CD8-positive, alpha-beta T cell (primary cell): ENCODE measurements at regions of chr3 and their contacts with region 1.

Region 1: GRCh38 chr3:187164885-187165543 is 25.7 kb upstream of the RPL39L start:
- DNase-seq: peak in 6 of 9 experiments; percentile 8 to 83 (median 38)
- ATAC-seq: peak; percentile 77
- H3K4me3 ChIP-seq: no peak overlapping the region
- H3K4me3 Mint-ChIP-seq: no peak overlapping the region
- H3K27ac ChIP-seq: no peak overlapping the region
- H3K27ac Mint-ChIP-seq: no peak overlapping the region
- H3K4me1 ChIP-seq: no peaks in the 10 kb centered on the region
- H3K4me1 Mint-ChIP-seq: peaks cover 3% of the 10 kb centered on the region
- H3K27me3 ChIP-seq: peaks cover 0 to 3% of the 10 kb centered on the region in 2 experiments
- H3K27me3 Mint-ChIP-seq: no peaks in the 10 kb centered on the region
- CTCF ChIP-seq: peak; percentile 90

Region 2: DNA sequence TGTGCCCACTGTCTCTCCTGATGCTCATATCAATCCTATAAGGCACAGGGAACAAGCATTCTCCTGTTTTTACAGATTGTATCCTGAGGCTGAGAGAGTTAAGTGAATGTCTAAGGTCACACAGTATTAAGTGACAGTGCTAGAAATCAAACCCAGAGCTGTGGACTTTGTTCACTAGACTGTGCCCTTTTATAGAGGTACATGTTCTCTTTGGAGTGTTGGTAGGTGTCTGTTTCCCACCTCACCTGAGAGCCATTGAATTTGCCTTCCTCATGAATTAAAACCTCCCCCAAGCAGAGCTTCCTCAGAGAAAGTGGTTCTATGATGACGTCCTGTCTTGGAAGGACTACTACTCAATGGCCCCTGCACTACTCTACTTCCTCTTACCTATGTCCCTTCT is 310.1 kb before region 1 on chr3:
- CTCF ChIA-PET with region 1: interaction called, 45 read pairs
- POLR2A ChIA-PET with region 1: no interaction called
- intact Hi-C with region 1: no loop called
- DNase-seq: no peak
- ATAC-seq: no peak
- H3K4me3 ChIP-seq: no peak overlapping the region
- H3K4me3 Mint-ChIP-seq: no peak overlapping the region
- H3K27ac ChIP-seq: no peak overlapping the region
- H3K27ac Mint-ChIP-seq: no peak overlapping the region
- H3K4me1 ChIP-seq: no peaks in the 10 kb centered on the region
- H3K4me1 Mint-ChIP-seq: peaks cover 16% of the 10 kb centered on the region
- H3K27me3 ChIP-seq: no peaks in the 10 kb centered on the region
- H3K27me3 Mint-ChIP-seq: no peaks in the 10 kb centered on the region
- CTCF ChIP-seq: no peak

Region 3: GRCh38 chr3:187101184-187102072 is 63.6 kb before region 1 on chr3:
- CTCF ChIA-PET with region 1: interaction called, 44 read pairs
- POLR2A ChIA-PET with region 1: no interaction called
- intact Hi-C with region 1: no loop called
- DNase-seq: peak; percentile 25 to 74 (median 55)
- ATAC-seq: peak; percentile 71
- H3K4me3 ChIP-seq: peak overlapping the region in 1 of 2 experiments; percentile 27
- H3K4me3 Mint-ChIP-seq: peak overlapping the region; percentile 54
- H3K27ac ChIP-seq: peak overlapping the region in 1 of 2 experiments; percentile 44
- H3K27ac Mint-ChIP-seq: peak overlapping the region; percentile 63
- H3K4me1 ChIP-seq: peaks cover 16% of the 10 kb centered on the region
- H3K4me1 Mint-ChIP-seq: peaks cover 19% of the 10 kb centered on the region
- H3K27me3 ChIP-seq: no peaks in the 10 kb centered on the region
- H3K27me3 Mint-ChIP-seq: no peaks in the 10 kb centered on the region
- CTCF ChIP-seq: no peak

Region 4: DNA sequence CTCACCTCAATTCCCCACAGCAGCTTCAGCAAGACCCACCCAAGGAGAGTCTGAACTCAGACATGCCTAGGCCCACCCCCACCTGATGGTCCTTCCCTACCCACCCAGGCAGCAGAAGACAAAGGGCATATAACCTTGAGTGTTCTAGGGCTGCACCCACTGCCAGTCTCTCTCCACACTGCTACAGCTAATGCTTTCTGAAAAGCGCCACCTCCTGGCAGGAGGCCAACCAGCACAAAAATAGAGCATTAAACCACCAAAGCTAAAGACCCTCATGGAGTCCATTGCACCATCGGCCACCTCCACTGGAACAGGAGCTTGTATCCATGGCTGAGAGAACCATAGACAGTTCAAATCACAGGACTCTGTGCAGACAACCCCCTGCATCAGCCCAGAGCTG is 14.4 kb before region 1 on chr3:
- CTCF ChIA-PET with region 1: interaction called, 32 read pairs
- POLR2A ChIA-PET with region 1: no interaction called
- intact Hi-C with region 1: no loop called
- DNase-seq: peak; percentile 37 to 80 (median 65)
- ATAC-seq: peak; percentile 56
- H3K4me3 ChIP-seq: no peak overlapping the region
- H3K4me3 Mint-ChIP-seq: no peak overlapping the region
- H3K27ac ChIP-seq: no peak overlapping the region
- H3K27ac Mint-ChIP-seq: no peak overlapping the region
- H3K4me1 ChIP-seq: no peaks in the 10 kb centered on the region
- H3K4me1 Mint-ChIP-seq: peaks cover 9% of the 10 kb centered on the region
- H3K27me3 ChIP-seq: no peaks in the 10 kb centered on the region
- H3K27me3 Mint-ChIP-seq: no peaks in the 10 kb centered on the region
- CTCF ChIP-seq: peak; percentile 39

Region 5: DNA sequence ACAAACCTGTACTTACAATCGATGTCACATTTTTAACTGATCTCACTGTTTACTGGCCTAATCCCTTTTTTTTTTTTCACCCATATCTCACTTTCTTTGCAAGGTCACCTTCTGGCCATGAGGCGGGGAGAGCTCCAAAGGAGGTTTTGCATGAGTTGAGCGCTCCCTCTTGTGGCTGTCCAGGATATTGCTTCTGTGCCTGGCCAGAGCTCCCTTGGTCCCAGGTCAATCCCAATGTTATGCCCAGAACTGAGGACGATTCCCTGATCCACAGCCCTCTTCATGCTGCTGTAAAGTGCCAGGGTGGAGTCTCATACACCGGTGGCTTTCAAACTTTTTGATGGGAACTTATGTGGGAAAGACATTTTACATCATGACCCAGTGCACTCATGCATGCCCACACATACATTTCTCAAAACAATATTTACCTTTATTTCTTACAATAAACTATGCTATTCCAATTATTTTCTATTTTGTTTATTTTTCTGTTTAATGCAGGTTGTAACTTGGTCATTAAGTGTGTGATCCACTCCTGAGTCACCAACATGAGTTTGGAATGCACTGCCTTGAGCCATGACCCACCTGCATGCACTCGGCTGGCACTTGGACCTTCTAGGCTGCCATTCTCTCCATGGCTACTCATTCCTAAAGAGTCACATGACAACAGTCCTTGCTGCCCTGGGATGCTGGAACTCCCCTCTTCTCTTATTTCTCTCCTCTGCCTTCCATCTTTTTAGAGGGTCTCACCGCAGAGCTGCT is 514.8 kb after region 1 on chr3:
- CTCF ChIA-PET with region 1: no interaction called
- POLR2A ChIA-PET with region 1: no interaction called
- intact Hi-C with region 1: no loop called
- DNase-seq: peak; percentile 32 to 75 (median 63)
- ATAC-seq: peak; percentile 54
- H3K4me3 ChIP-seq: no peak overlapping the region
- H3K4me3 Mint-ChIP-seq: no peak overlapping the region
- H3K27ac ChIP-seq: no peak overlapping the region
- H3K27ac Mint-ChIP-seq: no peak overlapping the region
- H3K4me1 ChIP-seq: no peaks in the 10 kb centered on the region
- H3K4me1 Mint-ChIP-seq: no peaks in the 10 kb centered on the region
- H3K27me3 ChIP-seq: no peaks in the 10 kb centered on the region
- H3K27me3 Mint-ChIP-seq: peaks cover 40% of the 10 kb centered on the region
- CTCF ChIP-seq: peak; percentile 94